Activated CD4-positive, alpha-beta memory T cell treated with anti-CD3 and anti-CD28 coated beads for 36 hours (primary cell): ENCODE measurements at regions of chr3 and their contacts with region 1.

Region 1: GRCh38 chr3:119293871-119294695 is at the start of gene ARHGAP31:
- DNase-seq: peak; percentile 95
- H3K4me3 Mint-ChIP-seq: peak within 1 kb of the TSS; percentile 83
- H3K27ac Mint-ChIP-seq: peak within 1 kb of the TSS; percentile 93
- H3K4me1 Mint-ChIP-seq: peaks cover 44% of the 10 kb centered on the region
- H3K27me3 Mint-ChIP-seq: no peaks in the 10 kb centered on the region
- total RNA-seq, gene ARHGAP31: 10.8 to 11.4 TPM

Region 2: GRCh38 chr3:119034256-119035013 is 259.6 kb before region 1 on chr3 and contains the start of gene IGSF11:
- CTCF ChIA-PET with region 1: no interaction called
- POLR2A ChIA-PET with region 1: no interaction called
- intact Hi-C with region 1: no loop called
- DNase-seq: peak; percentile 71
- H3K4me3 Mint-ChIP-seq: peak within 1 kb of the TSS; percentile 80
- H3K27ac Mint-ChIP-seq: no peak within 1 kb of the TSS
- H3K4me1 Mint-ChIP-seq: peaks cover 4% of the 10 kb centered on the region
- H3K27me3 Mint-ChIP-seq: peaks cover 38% of the 10 kb centered on the region
- total RNA-seq, gene IGSF11: 0.14 to 0.15 TPM

Region 3: GRCh38 chr3:119279101-119279554 is 15.0 kb before region 1 on chr3:
- CTCF ChIA-PET with region 1: interaction called, 9 read pairs
- POLR2A ChIA-PET with region 1: interaction called, 4 read pairs
- intact Hi-C with region 1: loop called (anchors 1 kb)
- DNase-seq: no peak
- H3K4me3 Mint-ChIP-seq: no peak overlapping the region
- H3K27ac Mint-ChIP-seq: no peak overlapping the region
- H3K4me1 Mint-ChIP-seq: peaks cover 7% of the 10 kb centered on the region
- H3K27me3 Mint-ChIP-seq: no peaks in the 10 kb centered on the region

Region 4: GRCh38 chr3:119322835-119323722 is 29.0 kb after region 1 on chr3:
- CTCF ChIA-PET with region 1: interaction called, 6 read pairs
- POLR2A ChIA-PET with region 1: interaction called, 45 read pairs
- intact Hi-C with region 1: loop called (anchors 1 kb)
- DNase-seq: peak; percentile 97
- H3K4me3 Mint-ChIP-seq: peak overlapping the region; percentile 82
- H3K27ac Mint-ChIP-seq: peak overlapping the region; percentile 95
- H3K4me1 Mint-ChIP-seq: peaks cover 41% of the 10 kb centered on the region
- H3K27me3 Mint-ChIP-seq: no peaks in the 10 kb centered on the region

Region 5: DNA sequence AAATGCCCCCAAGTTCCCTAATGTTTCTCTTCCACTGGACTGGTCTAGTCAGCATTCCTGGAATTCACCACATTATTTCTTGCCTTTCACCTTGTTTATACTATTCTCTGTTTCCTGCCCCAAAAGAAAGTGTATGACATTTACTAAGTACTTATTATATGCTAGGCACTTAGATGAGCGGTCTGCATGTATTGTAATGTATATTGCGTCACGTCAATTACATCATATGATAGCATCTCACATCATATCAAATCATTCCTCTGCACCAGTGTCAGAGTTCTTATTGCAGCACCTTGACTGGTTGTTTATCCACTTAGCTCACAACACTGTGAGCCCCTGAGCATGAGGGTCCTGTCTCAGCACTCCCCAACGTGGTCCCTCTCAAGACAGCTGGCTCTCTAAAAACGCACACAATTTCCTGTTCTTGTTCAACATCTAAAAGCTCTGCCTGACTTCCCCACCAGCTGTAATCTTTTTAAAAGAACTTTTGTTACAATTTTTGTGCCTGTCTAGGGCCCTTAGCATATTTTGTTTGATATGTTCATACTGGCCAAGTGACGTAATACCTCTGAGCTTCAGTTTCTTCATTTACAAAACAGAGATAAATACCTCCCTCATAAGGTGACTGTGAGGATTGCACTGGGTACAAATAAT is 58.9 kb after region 1 on chr3:
- CTCF ChIA-PET with region 1: interaction called, 5 read pairs
- POLR2A ChIA-PET with region 1: interaction called, 10 read pairs
- intact Hi-C with region 1: loop called (anchors 1 kb)
- DNase-seq: no peak
- H3K4me3 Mint-ChIP-seq: no peak overlapping the region
- H3K27ac Mint-ChIP-seq: no peak overlapping the region
- H3K4me1 Mint-ChIP-seq: peaks cover 30% of the 10 kb centered on the region
- H3K27me3 Mint-ChIP-seq: no peaks in the 10 kb centered on the region

Region 6: GRCh38 chr3:119443179-119443578 is 149.1 kb after region 1 on chr3:
- CTCF ChIA-PET with region 1: no interaction called
- POLR2A ChIA-PET with region 1: no interaction called
- intact Hi-C with region 1: no loop called
- DNase-seq: no peak
- H3K4me3 Mint-ChIP-seq: no peak overlapping the region
- H3K27ac Mint-ChIP-seq: no peak overlapping the region
- H3K4me1 Mint-ChIP-seq: peaks cover 7% of the 10 kb centered on the region
- H3K27me3 Mint-ChIP-seq: no peaks in the 10 kb centered on the region

Region 7: DNA sequence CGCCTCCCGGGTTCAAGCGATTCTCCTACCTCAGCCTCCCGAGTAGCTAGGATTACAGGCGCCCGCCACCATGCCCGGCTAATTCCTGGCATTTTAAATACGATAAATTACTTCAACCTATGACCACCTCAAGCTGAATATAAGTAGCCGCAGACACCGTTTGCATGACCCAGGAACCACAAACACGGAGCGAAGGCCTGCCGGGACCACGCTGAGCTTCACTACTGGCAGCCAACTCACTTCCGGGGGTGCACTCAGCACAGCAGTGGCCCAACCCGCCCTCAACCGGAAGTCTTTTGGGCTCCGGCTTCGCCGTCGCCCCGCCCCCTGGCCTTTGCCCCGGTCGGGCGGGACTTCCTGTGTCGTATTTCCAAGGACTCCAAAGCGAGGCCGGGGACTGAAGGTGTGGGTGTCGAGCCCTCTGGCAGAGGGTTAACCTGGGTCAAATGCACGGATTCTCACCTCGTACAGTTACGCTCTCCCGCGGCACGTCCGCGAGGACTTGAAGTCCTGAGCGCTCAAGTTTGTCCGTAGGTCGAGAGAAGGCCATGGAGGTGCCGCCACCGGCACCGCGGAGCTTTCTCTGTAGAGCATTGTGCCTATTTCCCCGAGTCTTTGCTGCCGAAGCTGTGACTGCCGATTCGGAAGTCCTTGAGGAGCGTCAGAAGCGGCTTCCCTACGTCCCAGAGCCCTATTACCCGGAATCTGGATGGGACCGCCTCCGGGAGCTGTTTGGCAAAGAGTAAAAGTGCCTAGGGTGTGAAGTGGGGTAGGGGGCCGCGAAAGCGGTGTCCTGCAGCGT is 204.3 kb after region 1 on chr3 and contains the start of gene TIMMDC1:
- CTCF ChIA-PET with region 1: interaction called, 3 read pairs
- POLR2A ChIA-PET with region 1: no interaction called
- intact Hi-C with region 1: loop called (anchors 10 kb)
- DNase-seq: peak; percentile 98
- H3K4me3 Mint-ChIP-seq: peak within 1 kb of the TSS; percentile 98
- H3K27ac Mint-ChIP-seq: peak within 1 kb of the TSS; percentile 96
- H3K4me1 Mint-ChIP-seq: peaks cover 29% of the 10 kb centered on the region
- H3K27me3 Mint-ChIP-seq: no peaks in the 10 kb centered on the region
- total RNA-seq, gene TIMMDC1: 93.7 to 105 TPM

Region 8: GRCh38 chr3:119579366-119580165 is 285.5 kb after region 1 on chr3 and contains the start of gene ADPRH:
- CTCF ChIA-PET with region 1: interaction called, 3 read pairs
- POLR2A ChIA-PET with region 1: interaction called, 3 read pairs
- intact Hi-C with region 1: loop called (anchors 10 kb)
- DNase-seq: peak; percentile 77
- H3K4me3 Mint-ChIP-seq: peak within 1 kb of the TSS; percentile 74
- H3K27ac Mint-ChIP-seq: peak within 1 kb of the TSS; percentile 61
- H3K4me1 Mint-ChIP-seq: peaks cover 26% of the 10 kb centered on the region
- H3K27me3 Mint-ChIP-seq: peaks cover 3% of the 10 kb centered on the region
- total RNA-seq, gene ADPRH: 7.7 to 8.6 TPM

Region 9: GRCh38 chr3:119702530-119703157 is 408.6 kb after region 1 on chr3 and contains the start of gene CFAP91:
- CTCF ChIA-PET with region 1: no interaction called
- POLR2A ChIA-PET with region 1: no interaction called
- intact Hi-C with region 1: loop called (anchors 2 kb)
- DNase-seq: peak; percentile 92
- H3K4me3 Mint-ChIP-seq: peak within 1 kb of the TSS; percentile 74
- H3K27ac Mint-ChIP-seq: no peak within 1 kb of the TSS
- H3K4me1 Mint-ChIP-seq: peaks cover 43% of the 10 kb centered on the region
- H3K27me3 Mint-ChIP-seq: no peaks in the 10 kb centered on the region
- total RNA-seq, gene CFAP91: 0.29 to 0.31 TPM